Activated T-helper 1 cell treated with anti-CD3 and anti-CD28 coated beads, Interleukin-12 subunit alpha, Interleukin-12 subunit beta, Interleukin-2, Interleukin-4 antibody, amounts not matched to agents 30 ng/mL and 10 ng/mL and 1 ng/mL, durations not matched to agents 14 hours and 24 hours and 36 hours (primary cell): ENCODE measurements at regions of chr9 and their contacts with region 1.

Region 1: GRCh38 chr9:20929276-20929675 is 102.2 kb downstream of the HACD4 start:
- DNase-seq: no peak
- H3K4me3 Mint-ChIP-seq: no peak overlapping the region
- H3K27ac Mint-ChIP-seq: no peak overlapping the region
- H3K4me1 Mint-ChIP-seq: peaks cover 30% of the 10 kb centered on the region
- H3K27me3 Mint-ChIP-seq: peaks cover 1% of the 10 kb centered on the region

Region 2: GRCh38 chr9:20884985-20885593 is 44.2 kb before region 1 on chr9:
- intact Hi-C with region 1: loop called (anchors 5 kb)
- DNase-seq: peak; percentile 12
- H3K4me3 Mint-ChIP-seq: no peak overlapping the region
- H3K27ac Mint-ChIP-seq: no peak overlapping the region
- H3K4me1 Mint-ChIP-seq: no peaks in the 10 kb centered on the region
- H3K27me3 Mint-ChIP-seq: no peaks in the 10 kb centered on the region